Activated T-helper 2 cell treated with anti-CD3 and anti-CD28 coated beads, Interferon-gamma antibody, Interleukin-2, Interleukin-4, amounts not matched to agents 10 μg/mL and 5 μg/mL and 100 μg/mL, durations not matched to agents 14 hours and 24 hours and 36 hours (primary cell): ENCODE measurements at regions of chr19 and their contacts with region 1.

Region 1: GRCh38 chr19:53195265-53195903 is 2.2 kb upstream of the ZNF665 start:
- DNase-seq: peak; percentile 66
- H3K4me3 Mint-ChIP-seq: peak overlapping the region; percentile 28
- H3K27ac Mint-ChIP-seq: no peak overlapping the region
- H3K4me1 Mint-ChIP-seq: peaks cover 24% of the 10 kb centered on the region
- H3K27me3 Mint-ChIP-seq: no peaks in the 10 kb centered on the region

Region 2: GRCh38 chr19:53103198-53103944 is 92.0 kb before region 1 on chr19 and contains the start of gene ZNF160:
- intact Hi-C with region 1: loop called (anchors 5 kb)
- DNase-seq: peak; percentile 99
- H3K4me3 Mint-ChIP-seq: peak within 1 kb of the TSS; percentile 87
- H3K27ac Mint-ChIP-seq: peak within 1 kb of the TSS; percentile 84
- H3K4me1 Mint-ChIP-seq: peaks cover 19% of the 10 kb centered on the region
- H3K27me3 Mint-ChIP-seq: no peaks in the 10 kb centered on the region
- total RNA-seq, gene ZNF160: 35.3 and 39.3 TPM in 2 replicates

Region 3: DNA sequence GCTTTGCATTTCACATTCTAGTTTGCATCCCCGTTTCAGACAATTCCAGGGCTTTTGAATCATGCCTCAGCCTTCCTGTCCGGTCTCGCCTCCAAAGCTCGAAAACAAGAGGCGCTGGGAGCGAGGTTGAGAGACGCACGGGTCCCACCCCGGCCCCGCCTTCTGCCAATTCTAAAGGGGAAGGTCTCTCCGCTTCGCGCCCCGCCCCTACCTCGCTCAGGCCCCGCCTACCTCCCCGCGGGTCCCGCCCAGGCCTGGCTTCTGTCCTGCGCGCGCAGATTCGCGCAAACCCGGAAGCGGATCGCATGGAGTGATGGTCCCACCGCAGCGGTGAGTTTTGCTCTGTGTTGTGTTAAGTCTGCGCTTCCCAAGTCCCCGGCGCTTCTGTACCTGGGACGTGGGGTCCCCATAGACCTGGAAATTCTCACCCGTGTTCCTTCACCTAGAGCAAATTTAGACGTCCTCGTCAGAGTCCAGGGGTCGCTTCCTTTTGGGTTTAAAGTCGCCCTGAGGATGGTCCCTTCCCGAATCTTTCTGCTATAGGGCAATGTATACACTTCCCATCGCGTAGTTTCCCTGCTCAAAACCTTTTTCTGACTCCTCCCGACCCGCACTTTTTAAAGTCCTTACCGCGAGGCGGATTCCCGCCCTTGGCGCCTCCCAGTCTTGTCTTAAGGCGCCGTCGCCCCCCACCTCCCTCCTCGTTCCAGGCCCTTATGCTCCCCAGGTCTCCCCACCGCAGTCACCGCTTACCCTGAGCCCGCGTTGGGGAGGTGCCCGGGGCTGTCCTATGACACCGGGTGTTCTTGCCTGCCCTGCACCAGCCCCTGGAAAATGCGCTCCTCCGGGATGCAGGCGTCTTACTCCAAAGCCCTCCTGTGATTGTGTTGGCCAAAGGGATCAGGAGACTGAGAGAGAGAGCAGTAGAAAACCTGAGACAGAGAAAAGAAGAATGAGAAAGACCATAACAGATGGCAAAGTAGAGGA is 138.4 kb after region 1 on chr19 and contains the start of gene ZNF845:
- intact Hi-C with region 1: loop called (anchors 5 kb)
- DNase-seq: peak; percentile 95
- H3K4me3 Mint-ChIP-seq: peak within 1 kb of the TSS; percentile 89
- H3K27ac Mint-ChIP-seq: peak within 1 kb of the TSS; percentile 87
- H3K4me1 Mint-ChIP-seq: peaks cover 5% of the 10 kb centered on the region
- H3K27me3 Mint-ChIP-seq: no peaks in the 10 kb centered on the region
- total RNA-seq, gene ZNF845: 5.6 and 5.9 TPM in 2 replicates

Region 4: DNA sequence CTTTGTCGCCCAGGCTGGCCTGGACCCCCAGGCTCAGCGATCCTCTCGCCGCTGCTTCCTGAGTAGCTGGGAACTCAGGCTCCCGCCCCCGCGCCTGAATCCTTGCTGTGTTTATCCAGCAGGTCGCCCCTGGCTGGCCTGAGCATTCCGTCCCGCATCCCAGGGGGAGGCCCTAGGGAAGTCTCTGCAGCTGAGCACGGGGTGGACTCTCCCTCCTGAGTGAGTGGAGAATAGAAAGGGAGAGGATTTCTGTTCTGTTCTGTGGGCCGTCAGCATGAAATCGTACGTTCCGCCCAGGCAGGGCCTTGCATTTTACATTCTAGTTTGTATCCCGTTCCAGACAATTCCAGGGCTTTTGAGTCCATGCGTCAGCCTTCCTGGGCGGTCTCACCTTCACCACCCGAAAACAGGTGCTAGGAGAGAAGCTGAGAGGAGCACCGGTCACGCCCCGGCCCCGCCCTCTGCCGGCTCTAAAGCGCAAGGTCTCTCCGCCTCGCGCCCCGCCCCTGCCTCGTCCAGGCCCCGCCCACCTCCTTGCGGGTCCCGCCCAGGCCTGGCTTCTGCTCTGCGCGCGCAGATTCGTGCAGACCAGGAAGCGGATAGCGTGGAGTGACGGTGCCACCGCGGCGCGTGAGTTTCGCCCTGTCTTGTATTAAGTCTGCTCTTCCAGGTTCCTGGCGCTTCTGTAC is 236.2 kb after region 1 on chr19 and contains the start of gene ZNF761:
- intact Hi-C with region 1: loop called (anchors 5 kb)
- DNase-seq: peak; percentile 96
- H3K4me3 Mint-ChIP-seq: peak within 1 kb of the TSS; percentile 94
- H3K27ac Mint-ChIP-seq: peak within 1 kb of the TSS; percentile 87
- H3K4me1 Mint-ChIP-seq: peaks cover 14% of the 10 kb centered on the region
- H3K27me3 Mint-ChIP-seq: no peaks in the 10 kb centered on the region
- total RNA-seq, gene ZNF761: 12.1 and 12.2 TPM in 2 replicates

Region 5: DNA sequence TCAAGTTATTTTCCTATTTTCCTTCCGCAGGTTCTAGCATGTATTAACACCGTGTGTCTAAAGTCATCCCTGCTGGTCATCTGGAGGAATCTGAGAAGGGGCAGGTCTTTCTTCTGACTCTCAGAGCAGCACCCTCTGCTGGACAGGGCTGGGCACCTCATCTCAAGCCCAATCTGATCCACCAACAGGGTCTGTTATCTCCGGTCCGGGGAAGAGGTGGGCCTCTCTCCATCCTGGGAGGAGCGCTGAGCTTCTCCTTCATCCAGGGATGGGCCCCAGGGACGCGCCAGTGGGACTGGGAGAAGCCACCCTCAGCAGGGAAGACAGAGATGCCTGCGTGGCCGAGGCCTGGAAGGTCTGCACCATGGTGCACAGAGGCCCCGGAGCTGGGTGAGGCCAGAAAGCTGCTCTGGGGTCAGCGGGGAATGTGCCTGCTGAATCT is 316.6 kb after region 1 on chr19:
- intact Hi-C with region 1: loop called (anchors 10 kb)
- DNase-seq: no peak
- H3K4me3 Mint-ChIP-seq: no peak overlapping the region
- H3K27ac Mint-ChIP-seq: no peak overlapping the region
- H3K4me1 Mint-ChIP-seq: no peaks in the 10 kb centered on the region
- H3K27me3 Mint-ChIP-seq: no peaks in the 10 kb centered on the region